OCI-LY7 (cell line): ENCODE measurements at regions of chr1 and their contacts with region 1.

Region 1: GRCh38 chr1:203702130-203702577 is 62.8 kb upstream of the LAX1 start:
- DNase-seq: peak; percentile 77
- H3K4me3 ChIP-seq: no peak overlapping the region
- H3K27ac ChIP-seq: no peak overlapping the region
- H3K4me1 ChIP-seq: peaks cover 15% of the 10 kb centered on the region
- CTCF ChIP-seq: peak; percentile 98

Region 2: DNA sequence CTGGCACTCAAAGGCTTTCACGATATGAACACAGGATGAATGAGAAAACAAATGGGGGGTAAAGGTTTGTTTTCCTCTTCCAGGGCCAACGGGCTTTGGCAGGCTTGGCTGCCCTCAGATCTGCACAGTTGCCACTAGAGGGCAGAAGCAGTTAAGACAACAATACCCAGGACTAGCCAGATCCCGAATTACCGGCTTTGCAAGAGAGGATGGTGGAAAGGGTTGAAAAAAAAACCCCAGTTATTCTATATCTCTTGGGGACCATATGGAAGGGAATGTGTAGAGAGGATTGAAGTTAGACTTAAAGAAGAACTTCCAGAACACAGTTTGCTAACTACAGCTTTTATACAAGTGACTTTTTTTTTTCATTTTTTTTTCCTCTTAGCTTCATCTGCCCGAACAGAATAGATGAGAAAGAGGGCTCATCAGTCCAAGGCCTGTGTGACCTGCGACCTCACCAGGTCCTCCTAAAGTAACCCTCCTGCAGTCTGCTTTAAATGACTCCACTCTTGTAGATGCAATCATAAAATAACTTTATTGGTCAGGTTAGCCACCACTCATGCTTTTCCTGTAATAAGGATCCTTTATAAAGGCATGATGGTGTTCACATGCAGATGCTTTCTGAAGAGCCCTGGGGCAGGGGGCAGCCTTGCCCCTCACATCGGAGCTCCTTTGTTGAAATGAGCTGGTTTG is 361.9 kb before region 1 on chr1:
- CTCF ChIA-PET with region 1: no interaction called
- POLR2A ChIA-PET with region 1: no interaction called
- intact Hi-C with region 1: loop called (anchors 1 kb)
- DNase-seq: peak; percentile 92
- H3K4me3 ChIP-seq: no peak overlapping the region
- H3K27ac ChIP-seq: peak overlapping the region; percentile 20
- H3K4me1 ChIP-seq: peaks cover 58% of the 10 kb centered on the region
- CTCF ChIP-seq: peak; percentile 99

Region 3: DNA sequence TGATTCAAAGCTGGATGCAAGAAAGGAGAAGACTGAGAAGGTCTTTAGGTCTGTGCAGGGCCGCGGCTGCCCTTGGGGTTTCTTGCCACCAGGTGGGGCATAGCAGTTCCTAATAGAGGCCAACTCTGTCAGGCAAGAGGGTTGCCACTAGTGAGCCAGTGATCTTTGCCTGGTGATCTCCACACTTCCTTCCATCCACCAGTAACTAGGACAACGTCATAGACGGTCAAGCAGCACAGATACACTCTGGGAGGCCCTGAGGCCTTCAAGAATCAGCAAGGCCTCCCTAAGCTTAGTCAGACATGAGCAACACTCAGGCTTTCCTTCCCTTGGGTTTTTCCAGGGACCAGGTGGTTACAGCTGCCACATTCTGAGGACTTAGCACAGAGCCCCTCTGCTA is 108.4 kb before region 1 on chr1:
- CTCF ChIA-PET with region 1: interaction called, 4 read pairs
- POLR2A ChIA-PET with region 1: interaction called, 5 read pairs
- intact Hi-C with region 1: loop called (anchors 1 kb)
- DNase-seq: peak; percentile 53
- H3K4me3 ChIP-seq: no peak overlapping the region
- H3K27ac ChIP-seq: no peak overlapping the region
- H3K4me1 ChIP-seq: no peaks in the 10 kb centered on the region
- CTCF ChIP-seq: peak; percentile 72

Region 4: GRCh38 chr1:203625628-203626019 is 76.5 kb before region 1 on chr1:
- CTCF ChIA-PET with region 1: interaction called, 11 read pairs
- POLR2A ChIA-PET with region 1: interaction called, 6 read pairs
- intact Hi-C with region 1: loop called (anchors 1 kb)
- DNase-seq: peak; percentile 77
- H3K4me3 ChIP-seq: peak overlapping the region; percentile 74
- H3K27ac ChIP-seq: peak overlapping the region; percentile 78
- H3K4me1 ChIP-seq: peaks cover 48% of the 10 kb centered on the region
- CTCF ChIP-seq: peak; percentile 78

Region 5: GRCh38 chr1:203776636-203777035 is 74.5 kb after region 1 on chr1:
- CTCF ChIA-PET with region 1: no interaction called
- POLR2A ChIA-PET with region 1: no interaction called
- intact Hi-C with region 1: loop called (anchors 2 kb)
- DNase-seq: peak; percentile 35
- H3K4me3 ChIP-seq: no peak overlapping the region
- H3K27ac ChIP-seq: no peak overlapping the region
- H3K4me1 ChIP-seq: peaks cover 6% of the 10 kb centered on the region
- CTCF ChIP-seq: peak; percentile 66; the same call in 1 of the 2 replicates